Tibial artery (tissue), 4 donors: ENCODE measurements at regions of chr3 and their contacts with region 1.

Region 1: DNA sequence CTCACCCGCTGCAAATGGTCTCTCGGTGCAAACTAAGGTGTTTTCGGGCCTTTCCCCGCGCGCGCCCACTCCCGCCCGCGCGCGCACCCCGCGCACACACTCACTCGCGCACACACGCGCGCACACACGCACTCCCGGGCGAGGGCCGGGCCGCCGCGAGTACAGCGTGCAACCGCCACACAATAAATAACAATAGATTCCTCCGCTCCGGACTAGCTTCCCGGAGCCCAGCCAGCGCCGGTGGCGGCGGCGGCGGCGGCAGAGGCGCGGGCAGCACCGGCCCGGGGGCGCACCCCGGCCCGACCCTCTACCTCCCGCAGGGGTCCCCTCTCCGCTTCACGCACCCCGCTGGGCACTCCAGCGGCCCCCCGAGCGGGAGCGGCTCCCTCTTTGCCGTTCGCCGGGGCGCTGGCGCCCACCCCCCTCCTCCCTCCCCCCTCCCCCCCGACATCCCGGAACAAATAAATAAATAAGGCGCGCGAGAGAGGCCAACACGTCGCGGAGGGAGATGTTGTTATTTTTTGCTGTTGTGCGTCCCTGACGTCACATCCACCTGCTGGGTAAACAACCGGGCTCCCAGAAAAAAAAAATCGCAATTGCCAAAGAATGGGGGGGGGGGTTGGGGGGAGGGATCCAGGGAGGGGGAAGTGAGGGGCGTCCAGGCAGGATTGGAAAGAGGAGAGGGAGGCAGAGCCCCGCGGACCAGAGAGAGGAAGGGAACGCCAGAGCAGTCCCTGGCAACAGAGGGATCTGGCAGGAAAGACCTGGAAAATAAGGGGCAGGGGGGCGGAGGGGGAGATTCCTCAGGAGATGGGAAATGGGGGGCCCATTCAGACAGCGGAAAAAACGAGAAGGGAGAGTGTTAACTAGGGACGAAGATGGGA is at the start of gene FOXP1:
- DNase-seq: peak; percentile 68 to 89
- H3K4me3 ChIP-seq: peak within 1 kb of the TSS; percentile 75 to 92
- H3K27ac ChIP-seq: peak within 1 kb of the TSS; percentile 93 to 99
- H3K4me1 ChIP-seq: peaks cover 0 to 48% (median 13%) of the 10 kb centered on the region in 4 donors
- H3K27me3 ChIP-seq: no peaks in the 10 kb centered on the region
- CTCF ChIP-seq: no peak

Region 2: DNA sequence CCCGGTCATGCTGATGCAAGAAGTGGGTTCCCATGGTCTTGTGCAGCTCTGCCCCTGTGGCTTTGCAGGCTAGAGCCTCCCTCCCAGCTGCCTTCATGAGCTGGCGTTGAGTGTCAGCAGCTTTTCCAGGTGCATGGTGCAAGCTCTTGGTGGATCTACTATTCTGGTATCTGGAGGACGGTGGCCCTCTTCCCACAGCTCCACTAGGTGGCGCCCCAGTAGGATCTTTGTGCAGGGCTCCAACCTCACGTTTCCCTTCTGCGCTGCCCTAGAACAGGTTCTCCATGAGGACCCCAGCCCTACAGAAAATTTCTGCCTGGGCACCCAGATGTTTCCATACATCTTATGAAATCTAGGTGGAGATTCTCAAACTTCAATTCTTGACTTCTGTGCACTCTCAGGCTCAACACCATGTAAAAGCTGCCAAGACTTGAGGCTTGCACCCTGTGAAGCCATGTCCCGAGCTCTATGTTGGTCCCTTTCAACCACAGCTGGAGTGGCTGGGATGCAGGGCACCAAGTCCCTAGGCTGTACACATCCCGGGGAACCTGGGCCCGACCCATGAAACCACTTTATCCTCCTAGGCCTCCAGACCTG is 1033.0 kb before region 1 on chr3:
- intact Hi-C with region 1: loop called (anchors 2 kb)
- DNase-seq: peak; percentile 66 to 80
- H3K4me3 ChIP-seq: no peak overlapping the region
- H3K27ac ChIP-seq: no peak overlapping the region
- H3K4me1 ChIP-seq: no peaks in the 10 kb centered on the region
- H3K27me3 ChIP-seq: no peaks in the 10 kb centered on the region
- CTCF ChIP-seq: peak; percentile 70 to 76

Region 3: GRCh38 chr3:70716832-70717231 is 867.0 kb before region 1 on chr3:
- intact Hi-C with region 1: loop called (anchors 10 kb)
- DNase-seq: peak in 1 of 2 donors; percentile 44
- H3K4me3 ChIP-seq: no peak overlapping the region
- H3K27ac ChIP-seq: no peak overlapping the region
- H3K4me1 ChIP-seq: peaks cover 0 to 8% (median 0%) of the 10 kb centered on the region in 4 donors
- H3K27me3 ChIP-seq: no peaks in the 10 kb centered on the region
- CTCF ChIP-seq: peak; percentile 59 to 67

Region 4: GRCh38 chr3:71069797-71070196 is 514.0 kb before region 1 on chr3:
- intact Hi-C with region 1: loop called (anchors 5 kb)
- DNase-seq: peak; percentile 83 to 84
- H3K4me3 ChIP-seq: no peak overlapping the region
- H3K27ac ChIP-seq: peak overlapping the region; percentile 94 to 99
- H3K4me1 ChIP-seq: peaks cover 0 to 91% (median 64%) of the 10 kb centered on the region in 4 donors
- H3K27me3 ChIP-seq: no peaks in the 10 kb centered on the region
- CTCF ChIP-seq: peak; percentile 45 to 46

Region 5: GRCh38 chr3:71130471-71131374 is 453.1 kb before region 1 on chr3:
- intact Hi-C with region 1: loop called (anchors 10 kb)
- DNase-seq: peak; percentile 76 to 79
- H3K4me3 ChIP-seq: peak overlapping the region; percentile 59 to 62
- H3K27ac ChIP-seq: peak overlapping the region; percentile 84 to 89
- H3K4me1 ChIP-seq: peaks cover 0 to 79% (median 38%) of the 10 kb centered on the region in 4 donors
- H3K27me3 ChIP-seq: no peaks in the 10 kb centered on the region
- CTCF ChIP-seq: no peak

Region 6: DNA sequence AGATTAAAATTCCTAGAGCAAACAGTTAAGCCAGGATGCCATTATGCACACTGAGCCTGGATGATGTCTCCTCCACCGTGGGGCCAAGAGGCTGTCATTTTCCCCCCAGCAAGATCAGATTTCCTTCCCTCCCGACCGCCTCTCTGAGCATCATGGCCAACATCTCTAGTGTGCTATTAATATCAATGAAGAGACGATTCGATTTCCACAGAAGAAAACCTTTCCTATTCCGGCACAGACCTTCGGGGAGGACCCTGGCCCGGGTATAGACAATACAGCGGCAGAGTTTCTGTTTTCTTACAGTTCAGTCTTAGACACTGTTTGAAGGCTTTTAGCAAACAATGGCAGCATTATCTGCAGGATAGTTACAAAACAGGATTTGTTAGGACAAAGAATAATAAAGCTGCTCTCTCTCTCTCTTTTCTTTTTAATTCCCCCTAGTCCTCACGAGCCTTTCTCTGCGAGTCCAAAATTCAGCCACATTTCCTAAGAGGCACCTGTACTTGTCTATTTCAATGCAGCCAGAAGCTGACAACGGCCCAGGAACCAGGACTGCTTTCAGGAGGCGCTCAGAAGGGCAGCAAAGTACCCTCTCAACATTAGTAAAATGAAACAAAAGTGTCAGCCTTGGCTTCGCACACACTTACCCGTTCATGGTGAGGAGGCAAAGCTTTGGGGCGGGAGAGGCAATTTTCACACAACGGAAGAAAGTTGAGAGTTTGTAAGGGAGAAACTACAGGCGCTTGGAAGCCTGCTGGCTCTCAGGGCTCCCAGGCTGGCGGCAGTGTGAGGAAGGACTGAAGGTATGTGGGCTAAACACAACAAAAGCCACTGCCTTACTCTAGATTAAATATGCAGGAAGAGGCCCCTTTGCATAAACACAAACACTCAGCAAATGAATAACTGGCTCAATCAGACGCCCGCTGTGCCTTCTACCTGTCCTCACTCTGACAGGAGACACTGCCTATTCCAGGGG is 278.3 kb before region 1 on chr3:
- intact Hi-C with region 1: loop called (anchors 5 kb)
- DNase-seq: peak in 1 of 2 donors; percentile 25
- H3K4me3 ChIP-seq: peak overlapping the region; percentile 38 to 42
- H3K27ac ChIP-seq: peak overlapping the region; percentile 59 to 73
- H3K4me1 ChIP-seq: peaks cover 0 to 57% (median 17%) of the 10 kb centered on the region in 4 donors
- H3K27me3 ChIP-seq: no peaks in the 10 kb centered on the region
- CTCF ChIP-seq: no peak

Region 7: DNA sequence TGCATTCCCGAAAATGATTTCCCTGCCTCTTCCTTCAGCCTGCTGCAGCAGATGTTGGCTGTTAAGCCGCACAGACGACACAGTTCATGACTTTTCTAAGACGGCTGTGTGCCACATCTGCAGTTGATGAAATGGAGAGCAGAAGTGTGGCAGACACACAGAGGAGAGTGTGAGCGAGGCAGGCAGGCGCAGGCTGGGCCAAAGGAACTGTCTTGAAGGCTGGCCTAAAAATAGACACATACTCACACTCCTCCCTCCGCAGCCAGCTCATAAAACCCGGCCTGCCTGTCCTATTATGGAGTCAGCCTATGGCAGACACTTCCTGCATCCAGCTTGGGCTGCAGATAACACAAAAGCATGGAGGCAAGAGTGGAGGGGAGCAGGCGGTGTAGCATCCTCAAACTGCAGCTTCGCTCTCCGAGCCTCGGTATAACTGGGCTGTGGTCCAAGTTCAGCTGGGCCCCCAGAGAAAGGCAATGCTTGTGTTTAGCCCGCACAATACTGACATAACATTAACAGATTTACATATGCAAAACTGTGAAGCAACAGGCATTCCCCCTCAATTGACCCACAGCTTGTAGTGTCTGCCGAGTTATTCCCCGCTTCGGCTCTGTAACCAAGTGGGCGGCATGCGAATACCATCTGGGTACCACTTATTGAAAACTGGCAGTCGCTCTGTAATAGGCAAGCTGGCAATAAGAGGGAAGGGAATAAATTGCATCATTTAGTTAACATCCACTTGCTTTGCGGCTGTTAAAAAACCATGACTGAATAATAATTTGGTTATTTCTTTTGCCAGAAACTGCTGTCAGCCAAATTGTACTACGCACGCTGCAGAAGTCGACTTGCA is 41.1 kb before region 1 on chr3:
- intact Hi-C with region 1: loop called (anchors 5 kb)
- DNase-seq: peak; percentile 91
- H3K4me3 ChIP-seq: peak overlapping the region; percentile 44 to 50
- H3K27ac ChIP-seq: peak overlapping the region; percentile 68 to 77
- H3K4me1 ChIP-seq: peaks cover 7 to 39% (median 29%) of the 10 kb centered on the region in 4 donors
- H3K27me3 ChIP-seq: no peaks in the 10 kb centered on the region
- CTCF ChIP-seq: no peak

Region 8: DNA sequence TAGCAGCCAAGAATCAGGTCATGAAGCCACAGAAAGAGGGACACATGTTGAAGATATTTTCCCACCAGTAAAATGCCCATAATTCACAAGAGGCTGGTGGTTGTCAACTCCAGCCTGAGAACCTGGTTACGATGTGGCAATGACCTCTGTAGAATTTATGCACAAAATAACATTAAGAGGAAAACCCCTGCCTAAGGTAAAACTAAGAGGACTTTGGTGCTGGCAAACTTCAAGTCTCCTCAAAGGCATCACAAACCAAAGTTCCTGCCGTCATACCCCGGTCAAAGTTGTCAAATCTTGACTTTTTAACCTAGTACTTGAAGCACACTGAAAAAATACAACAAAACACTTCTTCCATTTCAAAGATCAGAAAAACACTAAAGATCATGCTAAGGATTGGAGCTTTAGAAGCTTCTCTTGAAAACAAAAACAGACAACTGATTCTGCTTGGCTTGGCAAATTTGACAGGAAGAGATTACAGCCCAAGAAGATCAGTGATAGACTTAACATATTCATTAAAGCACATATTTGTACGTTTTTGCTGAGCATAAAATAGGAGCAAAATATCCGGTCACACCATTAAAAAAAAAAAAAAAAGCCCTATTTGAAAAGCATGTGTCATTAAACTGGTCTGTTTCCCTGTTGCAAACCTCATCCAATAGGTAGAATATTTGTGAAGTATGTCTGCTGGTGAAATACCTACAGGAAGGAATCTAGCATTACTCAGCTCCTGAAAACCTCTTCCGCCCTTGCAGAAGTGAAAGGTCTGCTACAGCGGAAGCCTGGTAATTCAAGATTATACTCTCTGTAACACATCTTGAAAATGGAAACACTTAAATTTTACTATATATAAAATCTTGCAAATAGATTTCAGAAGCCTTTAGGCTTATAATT is 118.6 kb after region 1 on chr3:
- intact Hi-C with region 1: no loop called
- DNase-seq: no peak
- H3K4me3 ChIP-seq: no peak overlapping the region
- H3K27ac ChIP-seq: no peak overlapping the region
- H3K4me1 ChIP-seq: peaks cover 0 to 2% (median 0%) of the 10 kb centered on the region in 4 donors
- H3K27me3 ChIP-seq: no peaks in the 10 kb centered on the region
- CTCF ChIP-seq: no peak

Region 9: GRCh38 chr3:71962561-71963240 is 378.9 kb after region 1 on chr3:
- intact Hi-C with region 1: no loop called
- DNase-seq: no peak
- H3K4me3 ChIP-seq: no peak overlapping the region
- H3K27ac ChIP-seq: no peak overlapping the region
- H3K4me1 ChIP-seq: no peaks in the 10 kb centered on the region
- H3K27me3 ChIP-seq: peaks cover 0 to 9% of the 10 kb centered on the region in 2 donors
- CTCF ChIP-seq: no peak